Lower leg skin (tissue), 4 donors: ENCODE measurements at regions of chr2 and their contacts with region 1.

Region 1: DNA sequence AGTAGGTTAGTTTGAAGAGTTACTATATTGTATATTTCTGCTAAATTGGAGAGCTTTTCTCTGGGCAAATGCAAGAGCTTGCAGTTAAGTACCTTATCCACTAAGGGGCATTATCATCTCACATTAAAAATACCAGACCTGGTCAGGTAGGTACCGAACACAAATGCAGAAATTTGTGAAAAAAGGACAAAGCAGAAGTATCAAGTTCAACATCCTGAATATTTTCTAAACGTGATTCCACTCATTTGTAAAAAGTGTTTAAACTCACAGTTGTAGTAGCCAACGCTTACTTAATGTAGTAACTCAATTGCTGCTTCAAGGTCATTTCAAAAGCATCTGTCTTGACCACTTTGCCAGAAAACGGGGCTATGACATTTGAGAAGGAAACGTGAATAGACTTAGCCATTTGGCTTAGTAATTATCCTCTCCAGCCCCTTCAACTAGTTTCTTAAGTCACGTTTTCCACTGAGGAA is 52.1 kb downstream of the CYRIA start:
- DNase-seq: no peak
- H3K4me3 ChIP-seq: no peak overlapping the region
- CTCF ChIP-seq: no peak
- POLR2A ChIP-seq: no peak

Region 2: DNA sequence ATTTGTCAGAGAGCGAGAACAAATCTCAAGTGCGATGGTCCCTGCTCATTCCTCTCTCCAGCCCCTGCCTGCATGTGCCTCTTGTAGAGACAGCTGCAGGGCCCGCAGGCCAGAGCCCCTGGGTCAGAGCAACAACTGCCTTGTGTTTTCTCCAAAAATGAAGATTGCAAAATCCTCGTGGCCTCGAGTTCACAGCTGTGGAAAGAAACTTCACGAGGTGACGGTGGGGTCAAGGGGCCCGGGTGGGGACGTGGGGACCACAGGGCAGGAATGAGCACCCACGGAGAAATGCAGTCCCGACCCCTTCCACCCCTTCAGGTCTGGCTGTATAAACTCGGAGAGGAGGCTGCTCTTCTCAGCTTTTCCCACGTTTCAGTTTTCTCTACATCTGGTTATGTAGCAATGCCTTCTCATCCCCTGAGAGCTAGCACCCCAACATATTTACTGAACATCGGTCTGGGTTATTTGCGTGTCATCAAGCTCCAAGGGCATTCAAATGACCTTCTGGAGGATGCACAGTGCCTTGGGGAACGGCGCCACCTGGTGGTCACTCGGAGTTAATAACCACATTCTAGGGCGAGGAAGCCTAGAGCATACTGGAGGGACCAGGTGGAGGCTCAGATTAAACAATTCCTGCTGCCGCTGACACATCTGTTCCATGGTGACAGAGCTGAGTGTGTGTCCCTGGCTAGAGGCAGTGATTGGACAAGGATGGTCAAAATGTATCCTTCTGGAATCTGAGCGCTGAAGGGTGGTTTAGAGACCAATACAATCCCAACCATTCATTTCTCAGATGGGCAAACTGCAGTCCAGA is 143.5 kb after region 1 on chr2:
- intact Hi-C with region 1: loop called (anchors 2 kb)
- DNase-seq: peak; percentile 69 to 96
- H3K4me3 ChIP-seq: no peak overlapping the region
- CTCF ChIP-seq: peak in 1 of 3 donors; percentile 77
- POLR2A ChIP-seq: no peak

Region 3: GRCh38 chr2:16911746-16912145 is 298.2 kb after region 1 on chr2:
- intact Hi-C with region 1: no loop called
- DNase-seq: no peak
- H3K4me3 ChIP-seq: no peak overlapping the region
- CTCF ChIP-seq: no peak
- POLR2A ChIP-seq: no peak